Stomach (tissue), 19 donors: ENCODE measurements at regions of chr17 and their contacts with region 1.

Region 1: GRCh38 chr17:72297326-72298115 is 176.7 kb downstream of the SOX9 start:
- DNase-seq: peak in 1 of 2 donors; percentile 21
- H3K4me3 ChIP-seq: no peak overlapping the region
- H3K27ac ChIP-seq: no peak overlapping the region
- H3K4me1 ChIP-seq: peaks cover 0 to 7% (median 0%) of the 10 kb centered on the region in 4 donors
- H3K27me3 ChIP-seq: no peaks in the 10 kb centered on the region
- CTCF ChIP-seq: no peak
- EP300 ChIP-seq: no peak
- POLR2A ChIP-seq: no peak

Region 2: DNA sequence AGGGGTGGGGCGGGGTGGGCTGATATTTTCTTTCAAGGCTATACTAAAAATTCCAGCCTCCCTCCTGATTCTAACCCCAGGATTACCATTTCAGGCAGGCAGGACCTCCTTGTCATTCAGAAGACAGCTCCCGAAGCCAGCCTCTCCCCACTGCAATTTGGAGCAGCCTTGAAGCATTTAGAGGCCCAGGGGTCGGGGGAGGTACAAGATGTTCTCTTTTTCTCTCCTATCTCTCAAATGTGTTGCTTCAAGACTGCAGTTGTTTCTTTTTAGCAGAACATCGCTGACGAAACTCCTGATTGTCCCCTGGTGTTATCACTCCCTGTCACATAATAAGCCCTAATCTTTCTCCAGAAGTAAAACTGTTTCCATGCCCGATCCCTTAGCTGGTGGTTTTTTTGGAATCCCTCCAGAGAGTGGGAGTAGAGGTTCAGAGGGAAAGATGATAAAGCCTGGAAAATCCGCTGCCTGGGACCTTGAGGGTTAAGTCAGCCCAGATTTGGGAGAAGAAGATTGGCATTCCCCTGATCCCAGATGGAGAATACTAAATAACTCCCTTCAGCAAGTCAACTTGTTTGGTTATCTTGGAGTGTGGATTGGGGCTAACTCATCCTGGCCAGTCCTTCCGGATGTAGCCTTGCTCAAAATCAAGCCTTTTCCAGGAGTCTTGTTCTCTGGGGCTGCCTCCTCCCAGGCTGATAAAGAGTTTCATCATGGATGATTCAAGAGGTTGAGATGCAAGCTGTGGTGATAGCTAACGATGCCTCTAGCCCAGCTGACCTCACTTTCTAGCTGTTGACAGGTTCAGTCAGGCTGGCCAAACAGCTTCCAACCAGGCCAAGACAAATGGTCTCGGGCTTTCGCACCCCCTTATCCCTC is 105.4 kb before region 1 on chr17:
- intact Hi-C with region 1: no loop called
- DNase-seq: no peak
- H3K4me3 ChIP-seq: no peak overlapping the region
- H3K27ac ChIP-seq: no peak overlapping the region
- H3K4me1 ChIP-seq: peaks cover 0 to 9% (median 3%) of the 10 kb centered on the region in 4 donors
- H3K27me3 ChIP-seq: no peaks in the 10 kb centered on the region
- CTCF ChIP-seq: no peak
- EP300 ChIP-seq: no peak
- POLR2A ChIP-seq: no peak

Region 3: DNA sequence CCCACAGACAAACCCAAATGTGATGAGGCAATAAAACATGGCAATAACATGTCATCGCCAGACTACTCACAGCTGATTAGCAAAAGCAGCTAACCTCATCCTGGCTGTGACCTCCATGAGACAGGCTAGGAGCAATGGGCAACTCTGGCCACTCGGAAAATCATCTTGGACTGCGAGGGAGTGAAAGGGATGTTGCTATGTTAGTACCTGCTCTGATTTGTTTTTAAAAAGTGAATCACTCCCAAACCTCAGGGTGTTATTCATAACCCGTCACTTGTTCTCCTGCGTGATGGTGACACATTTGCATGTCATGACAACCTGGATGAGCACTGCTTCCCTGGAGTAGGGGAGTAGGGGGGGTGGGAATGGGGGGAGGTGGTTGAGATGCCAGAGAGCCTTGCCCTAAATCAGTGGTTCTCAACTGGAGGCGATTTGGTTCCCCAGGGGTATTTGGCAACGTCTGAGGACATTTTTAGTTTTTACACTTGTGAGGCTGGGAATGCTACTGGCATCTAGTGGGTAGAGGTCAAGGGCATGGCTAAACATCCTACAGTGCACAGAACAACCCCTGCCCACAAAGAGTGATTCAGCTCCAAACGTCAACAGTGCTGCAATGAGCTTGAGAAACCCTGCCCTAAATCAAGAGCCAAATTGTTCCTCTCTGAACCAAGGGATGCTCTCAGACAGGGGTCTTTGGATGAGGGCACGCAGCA is 65.0 kb after region 1 on chr17:
- intact Hi-C with region 1: loop called (anchors 10 kb)
- DNase-seq: no peak
- H3K4me3 ChIP-seq: no peak overlapping the region
- H3K27ac ChIP-seq: no peak overlapping the region
- H3K4me1 ChIP-seq: peaks cover 0 to 9% (median 7%) of the 10 kb centered on the region in 4 donors
- H3K27me3 ChIP-seq: peaks cover 0 to 10% (median 0%) of the 10 kb centered on the region in 3 donors
- CTCF ChIP-seq: no peak
- EP300 ChIP-seq: no peak
- POLR2A ChIP-seq: no peak